ENCODE measurements at regions of chr5 and their contacts with region 1.

Region 1: DNA sequence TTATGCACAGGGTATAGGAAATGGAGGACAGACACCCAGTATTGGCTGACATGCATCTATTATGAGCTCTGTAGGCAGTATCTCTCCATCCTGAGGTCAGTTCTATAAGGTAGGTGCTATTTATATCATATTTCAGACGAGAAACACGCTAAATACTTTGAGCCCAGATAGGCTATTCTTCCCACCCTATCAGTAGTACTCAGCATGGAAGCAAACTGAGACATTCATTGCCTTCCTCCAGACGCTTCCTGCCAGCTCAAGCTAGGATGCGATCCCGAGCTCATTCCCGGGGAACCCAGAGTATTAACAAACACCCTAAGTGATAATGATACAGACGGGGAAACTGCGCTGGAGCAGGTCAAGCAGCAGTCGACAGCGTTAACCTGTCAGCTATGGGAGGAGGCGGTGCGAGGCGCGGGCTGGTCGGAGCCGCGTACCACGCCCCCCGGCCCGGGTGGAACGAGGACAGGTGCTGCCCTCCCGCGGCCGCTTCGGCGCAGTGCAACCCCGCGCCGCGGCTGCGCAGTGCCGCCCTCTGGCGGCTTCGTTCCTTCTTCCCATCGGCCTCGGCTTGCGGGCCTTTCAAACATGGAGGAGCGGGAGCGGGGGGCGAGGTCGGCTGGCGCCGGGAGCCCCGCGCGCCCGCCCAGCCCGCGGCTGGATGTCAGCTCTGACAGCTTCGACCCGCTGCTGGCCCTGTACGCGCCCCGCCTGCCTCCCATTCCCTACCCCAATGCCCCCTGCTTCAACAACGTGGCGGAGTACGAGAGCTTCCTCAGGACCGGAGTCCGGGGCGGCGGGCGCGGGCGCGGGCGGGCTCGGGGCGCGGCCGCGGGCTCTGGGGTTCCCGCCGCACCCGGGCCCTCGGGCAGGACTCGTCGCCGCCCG is at the start of gene LSM11:
- DNase-seq: peak; percentile 75 to 96 (median 88)
- ATAC-seq: peak; percentile 97
- H3K4me3 ChIP-seq: peak within 1 kb of the TSS; percentile 60
- H3K4me3 Mint-ChIP-seq: peak within 1 kb of the TSS; percentile 96
- H3K27ac ChIP-seq: no peak within 1 kb of the TSS
- H3K27ac Mint-ChIP-seq: peak within 1 kb of the TSS; percentile 68
- H3K4me1 ChIP-seq: peaks cover 20% of the 10 kb centered on the region
- H3K4me1 Mint-ChIP-seq: peaks cover 36% of the 10 kb centered on the region
- H3K27me3 ChIP-seq: no peaks in the 10 kb centered on the region
- H3K27me3 Mint-ChIP-seq: no peaks in the 10 kb centered on the region
- CTCF ChIP-seq: peak; percentile 99
- total RNA-seq, gene LSM11: 0.49 to 0.70 TPM

Region 2: DNA sequence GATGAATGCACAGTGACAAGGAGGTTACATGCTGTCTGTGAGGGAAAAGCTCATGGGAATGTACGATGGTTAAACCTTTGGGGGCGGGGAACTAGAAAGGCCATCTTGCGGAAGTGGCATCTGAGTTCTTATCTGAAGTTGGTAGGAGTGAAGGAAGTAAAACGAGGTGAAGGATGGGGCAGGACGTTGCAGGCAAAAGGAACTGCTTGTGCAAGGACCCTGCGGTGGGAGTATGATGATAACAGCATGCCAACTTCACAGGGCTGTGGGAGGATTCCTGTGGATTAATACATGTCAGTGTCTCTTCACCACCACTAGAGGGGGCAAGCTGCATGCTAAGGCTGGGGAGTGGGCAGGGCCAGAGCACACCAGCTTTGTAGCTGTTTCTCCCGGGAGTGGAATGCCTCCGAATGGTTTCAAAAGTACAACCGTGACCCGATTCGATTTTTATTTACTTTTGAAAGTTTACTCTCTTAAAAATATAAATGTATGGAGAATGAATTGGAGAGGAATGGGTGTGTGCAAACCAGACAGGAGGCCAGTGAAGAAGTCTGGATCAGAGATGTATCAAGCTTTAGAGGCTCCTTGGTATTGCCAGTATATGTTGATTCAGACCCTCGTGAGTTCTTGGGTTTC is 415.0 kb before region 1 on chr5:
- CTCF ChIA-PET with region 1: interaction called, 12 read pairs
- POLR2A ChIA-PET with region 1: no interaction called
- intact Hi-C with region 1: loop called (anchors 2 to 5 kb)
- DNase-seq: peak in 13 of 14 experiments; percentile 28 to 86 (median 45)
- ATAC-seq: peak; percentile 88
- H3K4me3 ChIP-seq: no peak overlapping the region
- H3K4me3 Mint-ChIP-seq: peak overlapping the region; percentile 70
- H3K27ac ChIP-seq: peak overlapping the region; percentile 12 to 71
- H3K27ac Mint-ChIP-seq: peak overlapping the region; percentile 89
- H3K4me1 ChIP-seq: peaks cover 32% of the 10 kb centered on the region
- H3K4me1 Mint-ChIP-seq: peaks cover 41% of the 10 kb centered on the region
- H3K27me3 ChIP-seq: no peaks in the 10 kb centered on the region
- H3K27me3 Mint-ChIP-seq: no peaks in the 10 kb centered on the region
- CTCF ChIP-seq: peak; percentile 89

Region 3: DNA sequence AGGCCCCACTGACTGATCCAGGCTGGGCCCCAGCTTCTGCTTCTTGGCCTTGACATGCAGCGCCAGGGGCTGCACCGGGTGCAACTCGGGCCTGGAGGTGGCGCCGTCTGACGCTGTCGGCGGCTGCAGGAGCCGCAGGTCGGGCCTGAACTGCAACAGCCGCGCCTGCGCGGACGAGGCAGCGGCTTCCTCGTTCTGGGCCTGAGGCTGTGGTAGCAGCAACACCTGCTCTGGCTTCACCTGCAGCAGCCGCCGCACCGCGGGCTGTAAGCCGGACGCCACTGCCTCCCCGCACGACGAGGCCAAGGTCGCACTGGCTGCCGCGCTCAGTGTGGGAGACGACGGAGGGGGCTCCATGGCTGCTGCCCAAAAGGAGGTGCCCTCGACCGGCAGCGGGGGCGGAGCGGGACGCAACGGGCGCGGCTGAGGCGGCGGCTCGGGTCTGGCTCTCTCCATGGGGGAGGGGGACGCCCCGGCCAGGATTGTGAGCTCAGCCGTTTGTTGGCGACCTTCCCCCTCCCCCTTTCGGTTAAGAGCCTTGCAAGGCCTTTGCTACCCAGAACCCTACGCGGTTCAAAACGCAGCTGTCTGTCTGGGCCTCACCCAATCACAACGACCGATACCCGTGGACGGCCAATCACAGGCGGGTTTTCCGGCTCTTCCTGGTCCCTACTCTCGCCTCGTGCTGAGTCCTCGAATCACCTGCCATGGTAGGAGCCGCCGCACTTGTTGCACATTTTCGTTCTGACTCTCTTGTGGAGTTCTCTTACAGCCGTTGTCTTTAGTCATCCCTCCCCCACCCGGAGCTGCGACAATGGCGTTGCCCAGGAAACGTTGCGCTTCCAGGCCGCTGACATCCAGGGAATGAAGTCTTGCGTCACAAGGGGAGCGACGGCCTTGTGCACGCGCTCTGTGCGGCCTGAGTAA is 91.5 kb before region 1 on chr5 and contains the start of gene SOX30:
- CTCF ChIA-PET with region 1: interaction called, 8 read pairs
- POLR2A ChIA-PET with region 1: interaction called, 6 read pairs
- intact Hi-C with region 1: loop called (anchors 5 kb)
- DNase-seq: peak; percentile 70 to 94 (median 81)
- ATAC-seq: peak; percentile 99
- H3K4me3 ChIP-seq: peak within 1 kb of the TSS; percentile 49
- H3K4me3 Mint-ChIP-seq: peak within 1 kb of the TSS; percentile 81
- H3K27ac ChIP-seq: peak within 1 kb of the TSS in 1 of 2 donors; percentile 13
- H3K27ac Mint-ChIP-seq: peak within 1 kb of the TSS; percentile 78
- H3K4me1 ChIP-seq: peaks cover 17% of the 10 kb centered on the region
- H3K4me1 Mint-ChIP-seq: peaks cover 21% of the 10 kb centered on the region
- H3K27me3 ChIP-seq: no peaks in the 10 kb centered on the region
- H3K27me3 Mint-ChIP-seq: no peaks in the 10 kb centered on the region
- CTCF ChIP-seq: peak; percentile 51
- total RNA-seq, gene SOX30: not detected

Region 4: GRCh38 chr5:157718519-157718918 is 24.9 kb before region 1 on chr5:
- CTCF ChIA-PET with region 1: interaction called, 4 read pairs
- POLR2A ChIA-PET with region 1: interaction called, 10 read pairs
- intact Hi-C with region 1: no loop called
- DNase-seq: peak in 5 of 14 experiments; percentile 13 to 74 (median 66)
- ATAC-seq: peak; percentile 81
- H3K4me3 ChIP-seq: no peak overlapping the region
- H3K4me3 Mint-ChIP-seq: no peak overlapping the region
- H3K27ac ChIP-seq: no peak overlapping the region
- H3K27ac Mint-ChIP-seq: no peak overlapping the region
- H3K4me1 ChIP-seq: peaks cover 17% of the 10 kb centered on the region
- H3K4me1 Mint-ChIP-seq: peaks cover 18% of the 10 kb centered on the region
- H3K27me3 ChIP-seq: no peaks in the 10 kb centered on the region
- H3K27me3 Mint-ChIP-seq: no peaks in the 10 kb centered on the region
- CTCF ChIP-seq: peak; percentile 68

Region 5: GRCh38 chr5:157858527-157859226 is 115.3 kb after region 1 on chr5 and contains the start of gene CLINT1:
- CTCF ChIA-PET with region 1: interaction called, 7 read pairs
- POLR2A ChIA-PET with region 1: no interaction called
- intact Hi-C with region 1: loop called in 1 of 2 experiments (anchors 5 kb)
- DNase-seq: peak; percentile 78 to 94 (median 86)
- ATAC-seq: peak; percentile 95
- H3K4me3 ChIP-seq: peak within 1 kb of the TSS; percentile 84
- H3K4me3 Mint-ChIP-seq: peak within 1 kb of the TSS; percentile 99
- H3K27ac ChIP-seq: peak within 1 kb of the TSS; percentile 81 to 89
- H3K27ac Mint-ChIP-seq: peak within 1 kb of the TSS; percentile 94
- H3K4me1 ChIP-seq: peaks cover 40% of the 10 kb centered on the region
- H3K4me1 Mint-ChIP-seq: peaks cover 83% of the 10 kb centered on the region
- H3K27me3 ChIP-seq: no peaks in the 10 kb centered on the region
- H3K27me3 Mint-ChIP-seq: no peaks in the 10 kb centered on the region
- CTCF ChIP-seq: no peak
- total RNA-seq, gene CLINT1: 89.9 to 91.3 TPM